WTC11 (cell line): ENCODE measurements at regions of chr12 and their contacts with region 1.

Region 1: GRCh38 chr12:50167041-50167828 is at the start of gene CERS5:
- DNase-seq: peak; percentile 99
- ATAC-seq: peak; percentile 95
- H3K4me3 Mint-ChIP-seq: peak within 1 kb of the TSS; percentile 87
- H3K27ac Mint-ChIP-seq: peak within 1 kb of the TSS; percentile 100
- H3K4me1 Mint-ChIP-seq: peaks cover 30% of the 10 kb centered on the region
- H3K27me3 Mint-ChIP-seq: no peaks in the 10 kb centered on the region
- CTCF ChIP-seq: 0 out of 2 replicates have a peak, but pooled peaks have one; percentile 23
- total RNA-seq, gene CERS5: 47.8 to 55.8 TPM (median 51.7 TPM) in 3 replicates

Region 2: DNA sequence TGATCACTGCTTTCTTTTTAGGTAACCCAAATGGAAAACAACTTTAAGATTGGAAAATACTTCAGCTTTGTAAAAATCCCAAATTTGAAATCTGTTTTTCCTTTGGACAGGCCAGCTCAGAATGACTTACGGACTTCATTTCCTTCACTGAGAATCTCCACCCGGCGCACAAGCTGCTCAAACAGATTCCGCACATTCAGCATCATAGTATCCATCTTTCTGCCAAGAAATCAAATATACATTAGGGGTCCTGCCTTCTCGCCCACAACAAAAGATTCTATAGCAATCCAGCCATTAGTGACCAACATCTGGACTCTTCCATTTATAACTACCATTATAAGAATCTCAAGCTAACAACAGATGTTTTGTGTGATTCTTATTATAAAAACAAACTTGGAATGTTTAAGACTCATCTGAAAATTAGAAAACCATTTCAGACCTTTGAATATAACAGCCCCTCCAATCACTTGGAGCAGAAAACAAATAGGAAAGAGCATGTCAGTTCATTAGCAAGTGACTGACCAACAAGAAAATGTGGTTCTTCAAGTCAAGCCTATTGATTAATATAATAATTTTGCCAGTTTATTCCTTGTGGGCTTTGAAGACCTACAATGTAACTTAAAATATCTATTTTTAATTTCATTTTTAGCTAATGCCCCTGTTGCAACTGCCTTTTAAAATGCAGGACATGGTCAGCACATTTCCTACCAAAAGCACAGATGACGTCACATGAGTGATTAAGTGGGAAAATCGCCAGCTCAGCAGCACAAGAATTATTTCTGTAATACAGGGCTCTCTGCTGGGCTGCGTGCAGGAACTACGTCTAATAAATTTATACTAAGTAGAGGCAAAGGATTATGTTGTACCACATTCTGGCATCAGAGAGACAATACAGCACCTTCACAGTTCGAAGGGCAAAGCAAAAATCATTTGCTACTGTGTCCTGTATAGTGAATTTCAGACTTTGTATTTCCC is 150.4 kb before region 1 on chr12:
- CTCF ChIA-PET with region 1: no interaction called
- POLR2A ChIA-PET with region 1: no interaction called
- DNase-seq: no peak
- ATAC-seq: no peak
- H3K4me3 Mint-ChIP-seq: no peak overlapping the region
- H3K27ac Mint-ChIP-seq: no peak overlapping the region
- H3K4me1 Mint-ChIP-seq: peaks cover 13% of the 10 kb centered on the region
- H3K27me3 Mint-ChIP-seq: no peaks in the 10 kb centered on the region
- CTCF ChIP-seq: no peak

Region 3: DNA sequence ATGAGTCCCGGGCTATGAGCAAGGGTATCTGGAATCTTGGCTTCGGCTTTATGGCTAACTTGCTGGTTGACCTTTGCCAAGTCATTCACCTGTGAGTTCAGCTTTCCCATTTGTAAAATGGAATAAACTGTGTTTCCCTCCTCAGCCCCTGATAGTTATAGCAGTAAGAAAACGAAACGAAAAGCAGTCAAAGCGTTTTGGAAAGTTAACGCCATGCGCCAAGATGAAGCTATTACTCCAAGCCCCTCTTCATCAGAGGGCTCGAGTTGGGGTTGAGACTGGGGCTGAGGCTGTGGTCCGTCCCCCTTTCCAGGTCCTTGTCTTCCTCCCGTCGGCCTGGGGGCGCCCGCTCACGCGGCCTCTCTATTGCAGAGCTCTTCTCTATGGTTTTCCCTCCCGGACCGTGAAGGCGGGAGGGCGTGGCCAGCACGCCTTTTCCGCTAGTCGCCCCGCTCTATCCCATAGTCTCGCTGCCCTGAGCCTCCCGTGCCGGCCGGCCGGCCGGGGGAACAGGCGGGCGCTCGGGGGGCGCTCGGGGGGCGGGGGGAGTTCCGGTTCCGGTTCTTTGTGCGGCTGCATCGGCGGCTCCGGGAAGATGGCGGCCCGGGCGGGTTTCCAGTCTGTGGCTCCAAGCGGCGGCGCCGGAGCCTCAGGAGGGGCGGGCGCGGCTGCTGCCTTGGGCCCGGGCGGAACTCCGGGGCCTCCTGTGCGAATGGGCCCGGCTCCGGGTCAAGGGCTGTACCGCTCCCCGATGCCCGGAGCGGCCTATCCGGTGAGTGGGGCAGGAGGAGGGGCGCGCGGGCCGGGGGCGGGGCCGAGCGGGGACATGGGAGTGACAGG is 82.2 kb before region 1 on chr12 and contains the start of gene SMARCD1:
- CTCF ChIA-PET with region 1: interaction called, 26 read pairs
- POLR2A ChIA-PET with region 1: interaction called, 14 read pairs
- DNase-seq: peak; percentile 96
- ATAC-seq: peak; percentile 93
- H3K4me3 Mint-ChIP-seq: peak within 1 kb of the TSS; percentile 89
- H3K27ac Mint-ChIP-seq: peak within 1 kb of the TSS; percentile 94
- H3K4me1 Mint-ChIP-seq: peaks cover 24% of the 10 kb centered on the region
- H3K27me3 Mint-ChIP-seq: peaks cover 26% of the 10 kb centered on the region
- CTCF ChIP-seq: no peak
- total RNA-seq, gene SMARCD1: 150 to 165 TPM (median 152 TPM) in 3 replicates